ENCODE measurements at regions of chr10 and their contacts with region 1.

Region 1: DNA sequence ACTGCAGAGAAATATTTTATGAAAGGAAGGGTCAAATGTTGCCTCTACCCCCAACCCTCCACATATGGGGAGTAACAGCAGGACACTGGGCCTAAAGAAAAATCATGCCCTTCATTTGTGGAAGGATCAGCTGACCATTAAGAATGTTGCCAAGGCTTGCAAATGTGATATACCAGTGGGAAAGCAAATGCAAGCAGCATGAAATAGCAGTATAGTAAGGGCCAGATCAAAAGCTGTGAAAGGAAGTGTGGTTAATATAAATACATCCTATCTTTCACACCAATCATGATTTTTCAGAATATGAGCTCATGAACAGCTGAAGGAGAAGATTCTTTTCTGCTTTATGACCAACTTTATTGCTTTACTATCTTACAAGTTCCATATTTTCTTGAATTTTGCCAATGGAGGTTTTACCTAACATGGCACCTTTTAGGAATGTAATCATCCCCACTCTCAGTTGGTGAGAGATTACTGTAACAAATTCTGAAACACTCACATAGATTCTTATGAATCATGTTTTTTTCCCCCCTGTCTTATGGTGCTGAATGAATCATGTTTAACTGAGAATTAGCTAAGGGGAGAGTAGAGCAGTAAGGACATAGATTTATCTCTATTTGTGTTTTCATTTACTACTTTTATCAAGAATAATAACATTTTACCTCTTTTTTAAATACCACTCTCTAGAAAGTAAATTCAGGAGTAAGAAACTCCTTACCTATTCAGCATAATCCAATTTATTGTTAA is 12.1 kb upstream of the ATAD1 start:
- DNase-seq: no peak
- H3K4me3 ChIP-seq: no peak overlapping the region
- H3K27ac ChIP-seq: no peak overlapping the region
- H3K4me1 ChIP-seq: no peaks in the 10 kb centered on the region
- H3K27me3 ChIP-seq: no peaks in the 10 kb centered on the region
- CTCF ChIP-seq: no peak
- EP300 ChIP-seq: no peak
- POLR2A ChIP-seq: no peak

Region 2: DNA sequence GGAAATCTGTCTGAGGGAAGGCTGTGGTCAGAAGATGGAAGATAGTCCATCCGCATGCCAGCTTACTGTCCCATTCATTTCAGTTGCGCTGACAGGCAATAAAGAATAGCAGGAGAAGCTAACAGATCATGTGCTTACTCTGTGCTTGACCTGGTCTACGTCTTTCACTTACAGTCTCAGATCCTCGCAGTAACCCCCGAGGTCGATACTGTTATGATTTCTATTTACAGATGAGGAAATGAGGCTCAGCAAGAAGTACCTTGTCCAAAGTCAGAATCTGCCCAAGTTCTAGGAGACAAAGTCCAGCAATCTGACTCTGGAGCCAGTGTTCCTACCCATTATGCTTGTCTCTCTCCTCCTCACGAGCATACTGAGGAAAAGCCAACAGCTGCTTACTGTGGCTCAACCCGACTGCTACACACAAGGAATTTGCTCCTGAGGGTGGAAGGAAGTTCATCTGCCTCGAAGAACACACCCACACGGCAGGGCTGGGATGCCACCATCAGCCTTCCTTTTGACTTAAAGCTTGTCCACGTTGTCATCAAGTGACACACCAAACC is 251.2 kb before region 1 on chr10:
- in situ Hi-C with region 1: no loop called
- intact Hi-C with region 1: no loop called
- DNase-seq: no peak
- H3K4me3 ChIP-seq: no peak overlapping the region
- H3K27ac ChIP-seq: peak overlapping the region in 2 of 4 donors; percentile 1 to 41
- H3K4me1 ChIP-seq: peaks cover 0 to 11% (median 3%) of the 10 kb centered on the region in 4 donors
- H3K27me3 ChIP-seq: no peaks in the 10 kb centered on the region
- CTCF ChIP-seq: no peak
- EP300 ChIP-seq: no peak
- POLR2A ChIP-seq: no peak

Region 3: DNA sequence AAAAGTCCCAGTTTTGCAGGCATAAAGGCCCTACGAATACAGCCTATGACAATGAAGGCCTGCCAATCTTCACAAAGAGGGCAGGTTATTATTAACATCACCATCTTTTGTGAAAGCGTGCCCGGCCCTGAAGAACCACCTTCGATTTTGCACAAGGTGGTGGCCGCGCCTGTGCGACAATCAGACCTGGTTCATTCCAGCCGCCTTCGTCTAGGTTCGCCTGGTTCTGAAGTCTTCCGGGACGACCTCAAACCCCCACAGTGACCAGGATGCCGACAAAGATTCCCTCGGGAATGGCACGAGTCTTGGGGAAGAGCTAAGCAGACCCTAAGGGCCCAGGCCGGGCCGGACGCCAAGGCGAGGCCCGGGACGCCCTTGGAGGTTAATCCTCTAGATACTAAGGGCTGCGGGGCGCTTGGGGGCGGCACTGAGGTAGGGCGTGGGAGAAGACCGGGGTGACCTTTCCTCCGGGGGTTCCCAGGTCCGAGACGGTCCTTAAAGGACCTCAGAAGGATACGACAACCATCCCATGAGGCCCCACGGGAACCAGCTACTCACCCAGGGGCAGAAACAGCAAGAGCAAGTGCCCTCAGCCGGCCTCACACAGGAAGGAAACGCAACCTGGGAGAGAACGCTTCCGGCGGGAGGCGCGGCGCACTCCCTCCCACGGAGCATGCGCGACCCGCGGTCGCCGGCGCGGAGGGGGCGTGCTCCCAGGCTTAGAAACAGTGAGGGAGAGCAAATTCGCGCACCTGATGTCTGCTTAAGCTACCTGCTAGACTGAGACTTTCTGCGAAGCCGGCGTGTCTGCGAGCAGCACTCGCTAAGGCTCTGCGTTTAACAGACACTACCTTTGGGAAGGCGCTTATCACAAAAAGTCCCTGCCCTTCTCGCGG is 12.3 kb before region 1 on chr10 and contains the start of gene ATAD1:
- in situ Hi-C with region 1: no loop called
- intact Hi-C with region 1: loop called (anchors 1 kb)
- DNase-seq: peak; percentile 90
- H3K4me3 ChIP-seq: peak within 1 kb of the TSS; percentile 63 to 82 (median 73)
- H3K27ac ChIP-seq: peak within 1 kb of the TSS; percentile 91 to 94 (median 92)
- H3K4me1 ChIP-seq: peaks cover 7 to 29% (median 21%) of the 10 kb centered on the region in 4 donors
- H3K27me3 ChIP-seq: no peaks in the 10 kb centered on the region
- CTCF ChIP-seq: peak in 3 of 5 experiments; percentile 18 to 26 (median 25)
- EP300 ChIP-seq: no peak
- POLR2A ChIP-seq: peak; percentile 81
- total RNA-seq, gene ATAD1: 8.6 to 43.5 (median 35.8) TPM

Measured in transverse colon (tissue), 4 donors.